ENCODE measurements at regions of chr3 and their contacts with region 1.

Region 1: GRCh38 chr3:194486540-194487288 is at the start of gene ATP13A3:
- DNase-seq: peak; percentile 92 to 95
- ATAC-seq: peak; percentile 92 to 97 (median 96)
- H3K4me3 ChIP-seq: peak within 1 kb of the TSS; percentile 74
- H3K27ac ChIP-seq: peak within 1 kb of the TSS; percentile 77
- H3K4me1 ChIP-seq: peaks cover 25% of the 10 kb centered on the region
- H3K27me3 ChIP-seq: no peaks in the 10 kb centered on the region
- CTCF ChIP-seq: no peak
- total RNA-seq, gene ATP13A3: 29.0 to 72.7 (median 50.3) TPM

Region 2: GRCh38 chr3:194508491-194509453 is 22.1 kb after region 1 on chr3:
- intact Hi-C with region 1: no loop called
- DNase-seq: no peak
- ATAC-seq: no peak
- H3K4me3 ChIP-seq: no peak overlapping the region
- H3K27ac ChIP-seq: no peak overlapping the region
- H3K4me1 ChIP-seq: no peaks in the 10 kb centered on the region
- H3K27me3 ChIP-seq: no peaks in the 10 kb centered on the region
- CTCF ChIP-seq: no peak

Region 3: GRCh38 chr3:194521514-194522260 is 35.0 kb after region 1 on chr3:
- intact Hi-C with region 1: loop called in 1 of 2 experiments (anchors 5 kb)
- DNase-seq: peak in 1 of 2 donors; percentile 20
- ATAC-seq: peak in 2 of 4 donors; percentile 14 to 28
- H3K4me3 ChIP-seq: no peak overlapping the region
- H3K27ac ChIP-seq: no peak overlapping the region
- H3K4me1 ChIP-seq: peaks cover 3% of the 10 kb centered on the region
- H3K27me3 ChIP-seq: no peaks in the 10 kb centered on the region
- CTCF ChIP-seq: no peak

Region 4: GRCh38 chr3:194583604-194584318 is 97.0 kb after region 1 on chr3:
- intact Hi-C with region 1: loop called (anchors 5 kb)
- DNase-seq: peak; percentile 95 to 98
- ATAC-seq: peak; percentile 95 to 100 (median 98)
- H3K4me3 ChIP-seq: peak overlapping the region; percentile 81
- H3K27ac ChIP-seq: peak overlapping the region; percentile 92
- H3K4me1 ChIP-seq: peaks cover 8% of the 10 kb centered on the region
- H3K27me3 ChIP-seq: no peaks in the 10 kb centered on the region
- CTCF ChIP-seq: no peak

Measured in psoas muscle (tissue), 8 donors.